Naive thymus-derived CD4-positive, alpha-beta T cell (primary cell): ENCODE measurements at regions of chr2 and their contacts with region 1.

Region 1: GRCh38 chr2:202671317-202672035 is 36.7 kb downstream of the FAM117B start:
- DNase-seq: no peak
- ATAC-seq: no peak
- H3K4me3 ChIP-seq: no peak overlapping the region
- H3K4me3 Mint-ChIP-seq: peak overlapping the region in 6 of 10 donors; percentile 9 to 81 (median 70)
- H3K27ac ChIP-seq: no peak overlapping the region
- H3K27ac Mint-ChIP-seq: peak overlapping the region in 5 of 9 donors; percentile 59 to 91 (median 84)
- H3K4me1 ChIP-seq: peaks cover 0 to 57% of the 10 kb centered on the region in 2 donors
- H3K4me1 Mint-ChIP-seq: peaks cover 42 to 93% (median 80%) of the 10 kb centered on the region in 7 donors
- H3K27me3 ChIP-seq: no peaks in the 10 kb centered on the region
- H3K27me3 Mint-ChIP-seq: no peaks in the 10 kb centered on the region

Region 2: GRCh38 chr2:202643012-202643858 is 28.2 kb before region 1 on chr2:
- CTCF ChIA-PET with region 1: interaction called, 4 read pairs
- POLR2A ChIA-PET with region 1: interaction called, 108 read pairs
- intact Hi-C with region 1: no loop called
- DNase-seq: peak in 7 of 9 donors; percentile 63 to 85 (median 79)
- ATAC-seq: peak; percentile 76
- H3K4me3 ChIP-seq: peak overlapping the region; percentile 44
- H3K4me3 Mint-ChIP-seq: peak overlapping the region in 6 of 10 donors; percentile 74 to 86 (median 79)
- H3K27ac ChIP-seq: peak overlapping the region; percentile 65
- H3K27ac Mint-ChIP-seq: peak overlapping the region in 5 of 9 donors; percentile 84 to 91 (median 86)
- H3K4me1 ChIP-seq: peaks cover 19 to 55% of the 10 kb centered on the region in 2 donors
- H3K4me1 Mint-ChIP-seq: peaks cover 31 to 72% (median 58%) of the 10 kb centered on the region in 7 donors
- H3K27me3 ChIP-seq: no peaks in the 10 kb centered on the region
- H3K27me3 Mint-ChIP-seq: no peaks in the 10 kb centered on the region

Region 3: DNA sequence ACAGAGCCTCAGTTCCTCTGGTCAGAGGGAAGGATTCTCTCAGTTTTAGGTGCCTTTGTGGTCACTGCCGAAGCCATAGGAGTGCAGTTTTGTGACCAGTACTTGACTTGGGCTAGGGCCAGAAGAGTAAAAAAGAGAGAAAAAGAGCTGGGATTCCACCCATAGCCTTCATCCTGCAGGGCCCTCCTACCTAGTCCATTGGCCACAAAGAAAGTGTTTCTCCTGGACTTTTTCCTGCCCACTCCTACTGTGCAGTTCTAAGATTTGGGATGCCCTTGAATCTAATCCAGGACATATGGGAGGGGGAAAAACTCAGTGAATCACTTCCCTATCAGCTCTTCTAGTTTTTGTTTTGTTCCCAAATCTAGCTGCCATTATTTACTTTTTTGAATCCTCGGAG is 10.7 kb before region 1 on chr2:
- CTCF ChIA-PET with region 1: no interaction called
- POLR2A ChIA-PET with region 1: interaction called, 11 read pairs
- intact Hi-C with region 1: loop called in 1 of 2 experiments (anchors 1 kb)
- DNase-seq: no peak
- ATAC-seq: no peak
- H3K4me3 ChIP-seq: no peak overlapping the region
- H3K4me3 Mint-ChIP-seq: peak overlapping the region in 6 of 10 donors; percentile 35 to 89 (median 56)
- H3K27ac ChIP-seq: no peak overlapping the region
- H3K27ac Mint-ChIP-seq: peak overlapping the region in 6 of 9 donors; percentile 30 to 87 (median 78)
- H3K4me1 ChIP-seq: peaks cover 0 to 56% of the 10 kb centered on the region in 2 donors
- H3K4me1 Mint-ChIP-seq: peaks cover 42 to 98% (median 87%) of the 10 kb centered on the region in 7 donors
- H3K27me3 ChIP-seq: no peaks in the 10 kb centered on the region
- H3K27me3 Mint-ChIP-seq: no peaks in the 10 kb centered on the region

Region 4: GRCh38 chr2:202681688-202682205 is 10.3 kb after region 1 on chr2:
- CTCF ChIA-PET with region 1: interaction called, 3 read pairs
- POLR2A ChIA-PET with region 1: interaction called, 3 read pairs
- intact Hi-C with region 1: loop called in 1 of 2 experiments (anchors 1 kb)
- DNase-seq: no peak
- ATAC-seq: no peak
- H3K4me3 ChIP-seq: no peak overlapping the region
- H3K4me3 Mint-ChIP-seq: no peak overlapping the region
- H3K27ac ChIP-seq: no peak overlapping the region
- H3K27ac Mint-ChIP-seq: no peak overlapping the region
- H3K4me1 ChIP-seq: peaks cover 0 to 7% of the 10 kb centered on the region in 2 donors
- H3K4me1 Mint-ChIP-seq: peaks cover 12 to 75% (median 58%) of the 10 kb centered on the region in 7 donors
- H3K27me3 ChIP-seq: no peaks in the 10 kb centered on the region
- H3K27me3 Mint-ChIP-seq: no peaks in the 10 kb centered on the region

Region 5: DNA sequence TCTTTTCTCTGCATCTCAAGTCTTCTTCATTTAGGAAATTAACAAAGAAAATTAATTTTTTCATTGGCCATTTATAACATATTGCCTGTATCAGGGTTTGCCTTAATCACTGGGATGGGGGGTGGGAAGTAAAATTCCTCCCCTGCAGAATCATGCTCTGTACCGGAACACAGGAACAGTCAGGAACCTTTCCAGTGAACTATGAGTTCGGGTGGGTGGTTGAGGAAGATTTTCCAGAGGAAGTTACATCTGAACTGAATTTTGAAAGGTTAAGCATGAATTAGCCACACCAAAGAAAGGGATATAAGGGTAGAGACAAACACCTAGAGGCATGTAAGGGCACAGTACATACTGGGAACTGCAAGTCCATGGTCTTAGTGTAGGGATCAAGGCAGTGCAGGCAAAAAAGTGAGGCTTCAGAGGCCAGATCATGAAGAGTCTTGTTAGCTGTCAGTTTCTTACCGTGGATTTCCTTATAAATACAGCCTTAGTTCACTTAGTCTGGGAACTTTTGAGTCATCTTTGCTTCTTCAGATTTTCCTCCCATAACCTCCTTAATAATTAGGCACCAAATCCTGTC is 18.9 kb after region 1 on chr2:
- CTCF ChIA-PET with region 1: interaction called, 4 read pairs
- POLR2A ChIA-PET with region 1: interaction called, 3 read pairs
- intact Hi-C with region 1: loop called in 1 of 2 experiments (anchors 2 kb)
- DNase-seq: no peak
- ATAC-seq: no peak
- H3K4me3 ChIP-seq: no peak overlapping the region
- H3K4me3 Mint-ChIP-seq: peak overlapping the region in 9 of 10 donors; percentile 18 to 65 (median 47)
- H3K27ac ChIP-seq: no peak overlapping the region
- H3K27ac Mint-ChIP-seq: peak overlapping the region in 8 of 9 donors; percentile 38 to 89 (median 64)
- H3K4me1 ChIP-seq: peaks cover 0 to 10% of the 10 kb centered on the region in 2 donors
- H3K4me1 Mint-ChIP-seq: peaks cover 13 to 94% (median 88%) of the 10 kb centered on the region in 7 donors
- H3K27me3 ChIP-seq: no peaks in the 10 kb centered on the region
- H3K27me3 Mint-ChIP-seq: no peaks in the 10 kb centered on the region

Region 6: DNA sequence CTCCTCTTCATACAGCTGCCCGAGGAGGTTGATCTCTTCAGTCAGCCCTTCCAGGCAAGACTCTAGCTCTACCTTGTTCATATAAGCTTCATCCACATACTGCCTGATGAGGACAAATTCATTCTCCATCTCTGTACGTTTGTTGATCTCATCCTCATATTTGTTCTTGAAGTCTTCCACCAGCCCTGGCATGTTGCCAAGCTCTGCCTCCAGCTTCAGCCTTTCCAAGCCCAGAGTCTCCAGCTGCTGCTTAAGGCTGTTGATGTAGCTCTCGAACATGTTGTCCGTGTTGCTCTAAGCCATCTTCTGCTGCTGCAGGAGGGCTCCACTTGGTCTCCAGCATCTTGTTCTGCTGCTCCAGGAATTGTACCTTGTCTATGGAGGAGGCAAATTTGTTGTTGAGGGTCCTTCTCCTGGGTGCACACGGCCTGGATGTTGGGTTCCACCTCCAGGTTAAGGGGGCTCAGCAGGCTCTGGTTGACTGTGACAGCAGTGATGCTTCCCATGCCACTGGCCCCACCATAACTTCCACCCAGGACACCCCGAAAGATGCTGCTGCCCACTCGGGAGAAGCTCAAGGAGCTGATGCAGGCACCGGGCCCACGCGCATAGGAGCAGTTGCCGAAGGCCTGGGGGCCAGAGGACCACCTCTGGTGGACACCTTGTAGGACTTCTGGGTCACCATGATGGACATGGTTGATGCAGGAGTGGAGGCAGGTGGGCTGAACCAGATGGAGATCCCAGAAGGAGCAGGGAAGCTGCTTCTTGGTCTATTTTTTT is 169.8 kb after region 1 on chr2:
- CTCF ChIA-PET with region 1: no interaction called
- POLR2A ChIA-PET with region 1: no interaction called
- intact Hi-C with region 1: no loop called
- DNase-seq: no peak
- ATAC-seq: no peak
- H3K4me3 ChIP-seq: no peak overlapping the region
- H3K4me3 Mint-ChIP-seq: no peak overlapping the region
- H3K27ac ChIP-seq: no peak overlapping the region
- H3K27ac Mint-ChIP-seq: peak overlapping the region in 1 of 9 donors; percentile 37
- H3K4me1 ChIP-seq: no peaks in the 10 kb centered on the region
- H3K4me1 Mint-ChIP-seq: peaks cover 0 to 7% (median 0%) of the 10 kb centered on the region in 7 donors
- H3K27me3 ChIP-seq: no peaks in the 10 kb centered on the region
- H3K27me3 Mint-ChIP-seq: no peaks in the 10 kb centered on the region